PC-9 (cell line): ENCODE measurements at regions of chr1 and their contacts with region 1.

Region 1: DNA sequence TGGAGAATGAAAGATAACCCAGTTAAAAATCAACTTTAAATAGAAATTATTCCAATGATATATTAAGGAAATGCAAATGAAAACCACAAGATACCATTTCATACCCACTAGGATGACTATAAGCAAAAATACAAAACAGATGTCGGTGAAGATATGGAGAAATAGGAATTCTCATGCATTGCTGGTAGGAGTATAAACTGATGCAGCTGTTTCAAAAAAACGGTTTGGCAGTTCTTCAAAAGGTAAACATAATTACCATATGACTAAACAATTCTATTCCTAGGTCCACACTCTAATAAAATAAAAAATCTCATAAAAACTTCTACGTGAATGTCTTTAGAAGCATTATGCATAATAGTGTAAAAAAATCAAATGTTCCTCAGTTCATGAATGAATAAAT is 763.3 kb upstream of the BRINP3 start:
- DNase-seq: no peak
- H3K4me3 ChIP-seq: no peak overlapping the region
- H3K27ac ChIP-seq: no peak overlapping the region
- H3K4me1 ChIP-seq: no peaks in the 10 kb centered on the region
- H3K27me3 ChIP-seq: no peaks in the 10 kb centered on the region
- CTCF ChIP-seq: no peak

Region 2: DNA sequence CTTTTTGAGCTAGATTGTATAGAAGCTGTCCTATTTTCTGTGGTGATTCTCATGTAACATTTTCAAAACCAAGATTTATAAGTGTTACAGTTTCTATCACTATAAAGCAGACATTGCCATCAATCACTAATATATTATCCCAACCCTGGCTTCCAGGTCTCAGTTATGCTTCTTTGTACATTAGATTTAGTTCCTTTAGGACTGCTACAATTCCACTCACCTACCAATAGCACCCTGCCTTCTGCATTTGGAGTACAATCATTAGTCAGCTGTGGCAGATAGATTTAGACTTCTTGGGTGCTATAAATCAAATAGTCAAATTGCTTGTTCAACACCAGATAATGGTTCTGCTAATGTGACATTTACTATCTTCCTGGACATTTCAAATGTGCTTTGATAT is 1044.9 kb before region 1 on chr1:
- CTCF ChIA-PET with region 1: no interaction called
- POLR2A ChIA-PET with region 1: no interaction called
- intact Hi-C with region 1: loop called (anchors 10 kb)
- DNase-seq: no peak
- H3K4me3 ChIP-seq: no peak overlapping the region
- H3K27ac ChIP-seq: no peak overlapping the region
- H3K4me1 ChIP-seq: no peaks in the 10 kb centered on the region
- H3K27me3 ChIP-seq: no peaks in the 10 kb centered on the region
- CTCF ChIP-seq: no peak

Region 3: DNA sequence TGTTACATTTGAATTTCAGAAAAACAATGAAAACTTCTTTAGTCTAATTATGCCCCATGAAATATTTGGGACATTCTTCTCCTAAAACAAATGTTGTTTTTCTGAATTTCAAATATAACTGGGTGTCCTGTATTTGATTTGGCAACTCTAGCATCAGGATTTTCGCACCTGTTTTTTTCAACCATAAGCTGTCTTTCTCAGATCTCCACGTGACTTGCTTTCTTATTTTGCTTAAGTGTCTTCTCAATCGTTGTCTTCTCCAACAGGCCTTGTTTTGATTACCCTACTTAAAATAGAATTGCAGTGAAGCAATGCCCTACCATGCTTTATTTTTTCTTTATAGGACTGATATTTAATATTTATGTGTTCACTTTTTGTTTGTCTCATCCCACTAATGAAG is 164.5 kb after region 1 on chr1:
- CTCF ChIA-PET with region 1: no interaction called
- POLR2A ChIA-PET with region 1: no interaction called
- intact Hi-C with region 1: no loop called
- DNase-seq: no peak
- H3K4me3 ChIP-seq: no peak overlapping the region
- H3K27ac ChIP-seq: no peak overlapping the region
- H3K4me1 ChIP-seq: no peaks in the 10 kb centered on the region
- H3K27me3 ChIP-seq: no peaks in the 10 kb centered on the region
- CTCF ChIP-seq: no peak